ENCODE measurements at regions of chr5 and their contacts with region 1.

Region 1: DNA sequence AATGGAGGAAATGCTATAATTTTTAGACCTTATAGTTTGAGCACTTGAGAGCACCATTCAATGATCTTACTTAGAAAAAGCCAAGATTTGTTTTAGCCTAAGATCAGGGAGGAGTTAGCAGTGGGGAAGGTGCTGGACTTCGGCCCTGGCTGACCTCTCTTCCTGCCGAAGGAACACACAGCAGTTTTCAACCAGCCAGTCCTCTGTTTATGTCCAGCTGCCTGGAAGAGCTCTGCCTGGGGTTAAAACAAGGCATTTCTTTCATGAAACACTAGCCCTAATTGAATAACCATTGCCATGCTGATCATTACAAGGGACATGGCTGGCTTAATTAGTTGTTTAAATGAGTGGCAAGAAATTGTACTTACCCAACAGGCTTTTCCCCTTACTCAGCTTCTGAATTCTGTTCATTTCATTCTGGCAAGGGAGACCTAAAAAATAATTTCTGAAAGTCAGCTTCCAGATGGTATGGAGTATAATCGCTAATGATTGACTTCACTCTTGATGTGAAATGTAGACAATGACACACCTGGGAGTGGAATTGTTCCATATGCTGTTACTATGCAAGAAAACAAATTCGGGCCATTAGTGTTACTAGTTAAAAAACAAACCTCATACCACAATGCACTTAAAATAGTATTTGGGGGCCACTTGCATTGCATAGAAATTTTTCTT is 514.2 kb downstream of the SPOCK1 start:
- DNase-seq: no peak
- ATAC-seq: peak in 1 of 2 donors; percentile 70

Region 2: GRCh38 chr5:136811551-136811950 is 173.4 kb before region 1 on chr5:
- intact Hi-C with region 1: loop called in 1 of 2 experiments (anchors 10 kb)
- DNase-seq: peak; percentile 21
- ATAC-seq: peak in 1 of 2 donors; percentile 88

Region 3: GRCh38 chr5:137563646-137564397 is 578.9 kb after region 1 on chr5:
- intact Hi-C with region 1: no loop called
- DNase-seq: peak; percentile 46
- ATAC-seq: peak; percentile 44 to 54

Measured in left cardiac atrium (tissue), 4 donors.